B cell (primary cell): ENCODE measurements at regions of chr22 and their contacts with region 1.

Region 1: GRCh38 chr22:17554814-17555213 is 8.5 kb upstream of the SLC25A18 start:
- DNase-seq: no peak
- ATAC-seq: no peak
- H3K4me3 ChIP-seq: no peak overlapping the region
- H3K4me3 Mint-ChIP-seq: no peak overlapping the region
- H3K27ac ChIP-seq: no peak overlapping the region
- H3K27ac Mint-ChIP-seq: no peak overlapping the region
- H3K4me1 ChIP-seq: no peaks in the 10 kb centered on the region
- H3K4me1 Mint-ChIP-seq: no peaks in the 10 kb centered on the region
- H3K27me3 ChIP-seq: no peaks in the 10 kb centered on the region
- H3K27me3 Mint-ChIP-seq: peaks cover 2% of the 10 kb centered on the region
- CTCF ChIP-seq: no peak

Region 2: DNA sequence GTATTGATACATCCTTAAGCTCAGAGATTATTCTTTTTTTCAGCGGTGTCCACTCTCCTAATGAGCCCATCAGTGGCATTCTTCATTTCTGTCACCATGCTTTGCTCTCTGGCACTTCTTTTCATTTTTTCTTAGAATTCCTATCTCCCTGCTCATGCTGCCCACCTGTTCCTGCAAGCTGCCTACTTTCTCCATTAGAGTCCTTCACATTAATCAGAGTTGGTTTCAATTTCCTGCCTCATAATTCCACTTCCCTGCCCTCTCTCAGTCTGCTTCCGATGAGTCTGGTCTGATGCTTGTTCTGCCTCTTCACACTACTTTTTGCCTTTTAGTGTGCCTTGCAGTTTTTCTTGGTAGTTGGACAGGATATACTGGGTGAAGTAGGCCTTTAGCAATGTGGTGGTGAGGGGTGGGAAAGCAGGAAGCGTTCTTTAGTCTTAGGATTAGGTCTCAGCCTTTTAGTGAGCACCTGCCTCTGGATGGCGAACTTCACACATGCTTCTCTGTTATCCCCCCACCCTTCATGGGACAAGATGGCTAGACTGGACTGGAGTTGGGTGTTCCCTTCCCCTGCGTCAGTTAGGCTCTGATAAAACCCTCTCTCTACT is 132.0 kb before region 1 on chr22:
- CTCF ChIA-PET with region 1: no interaction called
- POLR2A ChIA-PET with region 1: no interaction called
- intact Hi-C with region 1: no loop called
- DNase-seq: no peak
- ATAC-seq: no peak
- H3K4me3 ChIP-seq: no peak overlapping the region
- H3K4me3 Mint-ChIP-seq: no peak overlapping the region
- H3K27ac ChIP-seq: no peak overlapping the region
- H3K27ac Mint-ChIP-seq: no peak overlapping the region
- H3K4me1 ChIP-seq: no peaks in the 10 kb centered on the region
- H3K4me1 Mint-ChIP-seq: no peaks in the 10 kb centered on the region
- H3K27me3 ChIP-seq: no peaks in the 10 kb centered on the region
- H3K27me3 Mint-ChIP-seq: peaks cover 2% of the 10 kb centered on the region
- CTCF ChIP-seq: no peak

Region 3: DNA sequence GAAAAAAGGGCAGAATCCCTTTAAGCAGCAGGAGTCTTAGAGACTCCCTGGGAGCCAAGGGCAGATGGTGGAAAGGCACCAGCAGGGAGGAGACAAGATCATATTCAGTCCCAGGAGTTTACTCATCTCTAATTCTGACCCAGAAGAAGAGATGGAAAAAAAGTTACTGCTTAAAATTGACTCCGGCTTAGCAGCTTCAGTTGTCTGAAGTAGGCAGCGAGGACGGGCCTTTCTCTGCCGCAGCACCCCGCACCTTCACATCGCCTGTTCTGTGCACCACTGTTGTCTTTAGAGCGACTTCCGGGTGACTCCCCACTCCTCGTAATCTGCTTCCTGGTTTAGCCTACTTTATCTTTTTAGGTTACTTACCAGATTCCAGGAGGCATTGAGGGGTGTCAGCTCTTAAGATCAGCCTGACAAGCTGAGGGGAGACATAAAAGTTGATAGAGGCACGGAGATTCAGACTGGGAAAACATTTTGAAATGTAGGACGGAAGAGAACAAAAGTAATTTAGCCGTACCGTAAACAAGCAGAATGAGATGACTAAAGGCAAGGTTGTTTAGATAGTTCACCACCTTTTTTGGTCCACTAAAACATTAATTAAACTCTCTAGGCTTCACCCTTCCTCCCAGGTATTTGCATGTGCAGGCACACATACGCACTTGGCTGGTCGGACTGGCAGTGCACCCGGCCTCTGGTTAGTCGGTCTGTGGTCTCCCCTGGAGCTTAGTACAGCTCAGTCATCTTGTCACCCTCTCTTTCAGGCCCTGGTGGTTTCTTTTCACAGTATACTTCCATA is 111.2 kb before region 1 on chr22:
- CTCF ChIA-PET with region 1: no interaction called
- POLR2A ChIA-PET with region 1: no interaction called
- intact Hi-C with region 1: no loop called
- DNase-seq: no peak
- ATAC-seq: no peak
- H3K4me3 ChIP-seq: no peak overlapping the region
- H3K4me3 Mint-ChIP-seq: no peak overlapping the region
- H3K27ac ChIP-seq: no peak overlapping the region
- H3K27ac Mint-ChIP-seq: no peak overlapping the region
- H3K4me1 ChIP-seq: no peaks in the 10 kb centered on the region
- H3K4me1 Mint-ChIP-seq: no peaks in the 10 kb centered on the region
- H3K27me3 ChIP-seq: no peaks in the 10 kb centered on the region
- H3K27me3 Mint-ChIP-seq: peaks cover 5% of the 10 kb centered on the region
- CTCF ChIP-seq: no peak

Region 4: DNA sequence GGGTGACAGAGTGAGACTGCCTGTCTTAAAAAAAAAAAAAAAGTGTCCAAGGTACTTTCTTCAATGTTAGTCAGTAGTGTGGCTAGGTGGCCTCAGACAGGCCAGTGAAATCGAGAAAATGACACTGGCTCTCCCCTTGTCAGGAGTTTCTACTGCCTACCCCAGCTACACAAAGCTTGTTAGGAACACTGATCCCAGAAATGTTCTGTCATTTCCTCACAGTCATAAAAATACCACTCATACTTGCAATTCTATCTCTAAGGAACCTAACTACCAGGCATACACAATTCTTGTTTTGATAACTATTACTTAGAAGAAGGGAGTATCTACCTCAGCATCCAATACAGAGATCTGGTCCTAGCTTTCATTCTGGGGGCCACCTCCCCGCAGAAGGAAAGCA is 42.4 kb after region 1 on chr22:
- CTCF ChIA-PET with region 1: interaction called, 8 read pairs
- POLR2A ChIA-PET with region 1: no interaction called
- intact Hi-C with region 1: loop called (anchors 2 kb)
- DNase-seq: no peak
- ATAC-seq: no peak
- H3K4me3 ChIP-seq: no peak overlapping the region
- H3K4me3 Mint-ChIP-seq: no peak overlapping the region
- H3K27ac ChIP-seq: no peak overlapping the region
- H3K27ac Mint-ChIP-seq: no peak overlapping the region
- H3K4me1 ChIP-seq: peaks cover 26 to 27% of the 10 kb centered on the region in 2 donors
- H3K4me1 Mint-ChIP-seq: peaks cover 30% of the 10 kb centered on the region
- H3K27me3 ChIP-seq: no peaks in the 10 kb centered on the region
- H3K27me3 Mint-ChIP-seq: no peaks in the 10 kb centered on the region
- CTCF ChIP-seq: no peak

Region 5: GRCh38 chr22:17742527-17742902 is 187.7 kb after region 1 on chr22:
- CTCF ChIA-PET with region 1: interaction called, 25 read pairs
- POLR2A ChIA-PET with region 1: no interaction called
- intact Hi-C with region 1: no loop called
- DNase-seq: peak; percentile 85
- ATAC-seq: peak; percentile 94
- H3K4me3 ChIP-seq: no peak overlapping the region
- H3K4me3 Mint-ChIP-seq: no peak overlapping the region
- H3K27ac ChIP-seq: no peak overlapping the region
- H3K27ac Mint-ChIP-seq: peak overlapping the region; percentile 26
- H3K4me1 ChIP-seq: peaks cover 0 to 6% of the 10 kb centered on the region in 2 donors
- H3K4me1 Mint-ChIP-seq: peaks cover 8% of the 10 kb centered on the region
- H3K27me3 ChIP-seq: no peaks in the 10 kb centered on the region
- H3K27me3 Mint-ChIP-seq: no peaks in the 10 kb centered on the region
- CTCF ChIP-seq: peak; percentile 75

Region 6: DNA sequence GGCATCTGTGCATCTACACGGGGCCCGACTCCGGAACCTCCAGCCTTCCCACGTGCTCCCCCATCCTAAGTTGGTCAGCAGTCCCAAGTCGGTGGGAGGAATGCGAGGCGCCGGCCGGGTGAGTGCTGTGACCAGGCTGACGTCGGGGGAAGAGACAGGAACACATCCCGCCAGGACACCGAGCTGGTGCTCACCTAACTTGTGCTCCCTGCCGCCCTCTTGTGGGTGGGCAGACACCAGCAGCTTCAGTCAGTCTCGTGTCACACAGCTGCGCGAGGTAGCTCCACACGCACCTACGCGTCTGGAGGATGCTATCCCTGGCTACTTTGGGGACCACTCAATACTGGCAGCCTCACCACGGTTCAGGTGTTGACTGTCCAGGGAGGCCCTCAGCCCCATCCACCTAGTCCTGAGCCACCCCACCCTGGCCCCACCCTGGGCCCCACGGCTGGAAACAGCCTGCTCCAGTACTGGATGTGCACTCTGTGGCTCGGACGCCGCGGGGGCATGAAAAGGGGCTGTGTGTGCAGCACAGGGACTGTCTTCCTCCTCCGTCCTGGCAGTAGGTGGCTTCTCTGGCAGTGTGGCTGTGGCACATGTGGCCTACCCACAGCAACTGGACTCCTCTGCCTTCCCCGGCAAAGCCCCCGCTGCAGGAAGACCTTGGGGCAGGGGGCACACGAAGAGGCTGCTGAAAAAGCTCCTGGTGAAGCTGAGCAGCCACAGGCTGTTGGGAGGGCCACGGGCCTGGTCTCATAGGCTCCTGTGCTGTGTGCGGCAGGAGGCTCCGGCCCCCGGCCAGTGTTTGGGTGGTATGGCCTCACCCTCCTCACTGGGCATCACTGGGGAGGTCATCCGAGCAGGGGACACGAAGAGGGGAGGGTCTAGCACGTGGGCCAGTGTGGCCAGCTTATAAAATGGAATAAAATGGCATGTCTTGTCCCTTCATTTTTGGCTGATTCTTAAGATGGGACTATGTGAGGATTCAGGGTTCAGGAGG is 230.7 kb after region 1 on chr22:
- CTCF ChIA-PET with region 1: interaction called, 20 read pairs
- POLR2A ChIA-PET with region 1: no interaction called
- intact Hi-C with region 1: no loop called
- DNase-seq: peak; percentile 76
- ATAC-seq: peak; percentile 47
- H3K4me3 ChIP-seq: no peak overlapping the region
- H3K4me3 Mint-ChIP-seq: no peak overlapping the region
- H3K27ac ChIP-seq: peak overlapping the region in 1 of 2 donors; percentile 50
- H3K27ac Mint-ChIP-seq: peak overlapping the region; percentile 37
- H3K4me1 ChIP-seq: peaks cover 11 to 16% of the 10 kb centered on the region in 2 donors
- H3K4me1 Mint-ChIP-seq: peaks cover 22% of the 10 kb centered on the region
- H3K27me3 ChIP-seq: no peaks in the 10 kb centered on the region
- H3K27me3 Mint-ChIP-seq: no peaks in the 10 kb centered on the region
- CTCF ChIP-seq: peak; percentile 77

Region 7: GRCh38 chr22:17797721-17798559 is 243.1 kb after region 1 on chr22:
- CTCF ChIA-PET with region 1: interaction called, 4 read pairs
- POLR2A ChIA-PET with region 1: no interaction called
- intact Hi-C with region 1: loop called (anchors 5 kb)
- DNase-seq: peak; percentile 90
- ATAC-seq: peak; percentile 58
- H3K4me3 ChIP-seq: no peak overlapping the region
- H3K4me3 Mint-ChIP-seq: peak overlapping the region; percentile 73
- H3K27ac ChIP-seq: peak overlapping the region; percentile 63 to 76
- H3K27ac Mint-ChIP-seq: peak overlapping the region; percentile 93
- H3K4me1 ChIP-seq: peaks cover 56 to 73% of the 10 kb centered on the region in 2 donors
- H3K4me1 Mint-ChIP-seq: peaks cover 72% of the 10 kb centered on the region
- H3K27me3 ChIP-seq: no peaks in the 10 kb centered on the region
- H3K27me3 Mint-ChIP-seq: no peaks in the 10 kb centered on the region
- CTCF ChIP-seq: no peak

Region 8: DNA sequence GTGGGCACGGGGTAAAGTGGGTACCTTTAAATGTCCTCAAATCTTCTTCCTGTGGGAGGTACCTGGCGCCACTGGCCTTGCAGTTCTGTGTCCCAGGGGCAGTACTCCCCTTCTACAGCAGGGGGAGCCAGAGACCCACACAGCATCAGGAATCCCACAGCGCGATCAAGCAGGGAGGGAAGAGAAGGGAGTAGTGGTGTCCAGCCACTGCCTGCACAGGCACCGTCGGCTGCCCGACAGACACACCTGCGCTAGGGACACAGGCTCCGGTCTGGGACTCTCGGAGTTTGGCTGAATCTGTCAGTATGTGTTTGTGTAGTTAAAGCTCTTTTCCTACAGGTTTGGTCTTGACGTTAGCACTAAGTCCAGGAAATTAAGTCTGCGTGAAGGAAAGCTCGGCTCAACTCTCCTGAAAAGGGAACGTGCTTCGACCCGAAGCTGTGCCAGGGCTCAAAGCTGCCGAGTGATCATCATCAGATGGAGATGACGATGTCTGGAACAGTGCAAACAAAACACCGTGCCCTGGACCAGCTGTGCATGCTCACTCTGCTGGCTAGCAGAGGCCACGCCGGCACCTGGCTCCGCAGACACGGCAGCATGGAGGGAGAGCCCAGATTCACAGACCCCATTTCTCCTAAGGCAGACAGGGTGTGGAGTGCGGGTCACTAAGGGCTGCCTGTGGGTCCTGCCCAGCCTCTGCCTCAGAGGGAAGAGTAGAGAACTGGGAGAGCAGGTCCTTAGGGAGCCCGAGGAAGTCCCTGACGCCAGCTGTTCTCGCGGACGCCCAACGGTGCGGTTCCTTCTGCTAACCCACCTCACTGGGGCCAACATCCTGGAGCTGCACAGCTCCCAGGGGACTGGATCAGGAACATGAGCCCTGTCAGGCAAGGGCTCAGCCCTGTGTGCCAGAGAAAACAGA is 275.5 kb after region 1 on chr22:
- CTCF ChIA-PET with region 1: interaction called, 14 read pairs
- POLR2A ChIA-PET with region 1: no interaction called
- intact Hi-C with region 1: no loop called
- DNase-seq: peak; percentile 84
- ATAC-seq: peak; percentile 94
- H3K4me3 ChIP-seq: no peak overlapping the region
- H3K4me3 Mint-ChIP-seq: no peak overlapping the region
- H3K27ac ChIP-seq: peak overlapping the region in 1 of 2 donors; percentile 3
- H3K27ac Mint-ChIP-seq: peak overlapping the region; percentile 61
- H3K4me1 ChIP-seq: peaks cover 0 to 7% of the 10 kb centered on the region in 2 donors
- H3K4me1 Mint-ChIP-seq: peaks cover 6% of the 10 kb centered on the region
- H3K27me3 ChIP-seq: no peaks in the 10 kb centered on the region
- H3K27me3 Mint-ChIP-seq: no peaks in the 10 kb centered on the region
- CTCF ChIP-seq: peak; percentile 99